H1 (cell line): ENCODE measurements at regions of chr2 and their contacts with region 1.

Region 1: DNA sequence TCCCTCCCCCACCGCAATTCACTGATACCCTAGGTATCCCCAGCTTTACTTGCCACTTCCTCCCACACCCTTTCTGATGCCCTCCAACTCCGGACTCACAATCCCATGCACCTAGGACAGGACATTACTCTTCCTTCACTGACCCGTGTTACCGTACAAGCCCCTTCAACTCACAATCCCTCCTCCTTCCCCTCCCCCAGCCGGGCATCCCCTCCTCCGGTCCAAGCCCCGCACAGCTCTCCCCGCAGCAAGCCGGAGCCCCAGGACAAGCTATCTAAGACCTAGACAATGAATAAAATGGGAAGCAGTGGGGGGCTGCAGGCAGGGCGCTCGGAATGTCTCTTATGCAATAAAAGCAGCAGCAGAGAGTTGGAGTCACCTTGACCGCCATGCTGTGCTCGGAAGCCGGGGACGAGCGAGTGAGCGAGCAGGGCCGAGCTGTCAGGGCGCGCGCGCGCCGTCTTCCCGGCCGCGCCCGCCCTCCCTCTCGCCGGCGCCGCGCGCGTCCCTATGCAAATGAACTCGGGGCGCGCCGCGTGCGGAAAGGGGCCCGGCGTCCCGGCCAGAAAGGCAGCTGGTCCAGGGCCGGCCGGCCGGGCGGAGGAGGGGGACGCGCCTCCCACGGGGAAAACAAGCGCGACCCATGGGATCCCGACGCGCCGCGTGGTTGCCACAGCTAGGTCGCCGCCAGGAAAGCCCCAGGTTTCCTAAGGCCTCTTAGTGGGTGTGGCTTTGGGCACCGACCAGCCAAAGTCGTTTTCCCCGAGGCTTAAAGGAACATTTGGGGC is at the start of gene SLC25A12:
- DNase-seq: peak in 1 of 2 experiments; percentile 83
- H3K4me3 ChIP-seq: peak within 1 kb of the TSS; percentile 75 to 97 (median 82)
- H3K27ac ChIP-seq: peak within 1 kb of the TSS; percentile 2; the same call in 1 of the 2 replicates
- H3K4me1 ChIP-seq: peaks cover 0 to 6% (median 2%) of the 10 kb centered on the region in 4 experiments; a peak in 2 of 7 replicates
- H3K27me3 ChIP-seq: no peaks in the 10 kb centered on the region
- CTCF ChIP-seq: peak in 1 of 3 experiments; percentile 5; a peak in 1 of 4 replicates
- EP300 ChIP-seq: no peak
- POLR2A ChIP-seq: peak in 1 of 2 experiments; percentile 76; a peak in 2 of 3 replicates
- RAD21 ChIP-seq: no peak
- total RNA-seq, gene SLC25A12: 9.9 and 10.2 TPM in 2 replicates

Region 2: GRCh38 chr2:171882089-171882769 is 11.8 kb before region 1 on chr2:
- CTCF ChIA-PET with region 1: interaction called, 12 read pairs
- POLR2A ChIA-PET with region 1: interaction called, 23 read pairs
- DNase-seq: no peak
- H3K4me3 ChIP-seq: no peak overlapping the region
- H3K27ac ChIP-seq: no peak overlapping the region
- H3K4me1 ChIP-seq: no peaks in the 10 kb centered on the region
- H3K27me3 ChIP-seq: no peaks in the 10 kb centered on the region
- CTCF ChIP-seq: no peak
- EP300 ChIP-seq: no peak
- POLR2A ChIP-seq: no peak
- RAD21 ChIP-seq: no peak

Region 3: GRCh38 chr2:171922230-171923022 is 28.4 kb after region 1 on chr2 and contains the start of gene HAT1:
- CTCF ChIA-PET with region 1: interaction called, 6 read pairs
- POLR2A ChIA-PET with region 1: interaction called, 13 read pairs
- DNase-seq: peak; percentile 92 to 99
- H3K4me3 ChIP-seq: peak within 1 kb of the TSS; percentile 86 to 98 (median 92)
- H3K27ac ChIP-seq: peak within 1 kb of the TSS; percentile 96
- H3K4me1 ChIP-seq: no peaks in the 10 kb centered on the region; a peak in 3 of 7 replicates
- H3K27me3 ChIP-seq: no peaks in the 10 kb centered on the region
- CTCF ChIP-seq: peak in 1 of 3 experiments; percentile 2; a peak in 1 of 4 replicates
- EP300 ChIP-seq: no peak
- POLR2A ChIP-seq: peak; percentile 81 to 89
- RAD21 ChIP-seq: no peak
- total RNA-seq, gene HAT1: 68.4 and 74.2 TPM in 2 replicates